Ascending aorta (tissue), 2 donors: ENCODE measurements at regions of chr15 and their contacts with region 1.

Region 1: DNA sequence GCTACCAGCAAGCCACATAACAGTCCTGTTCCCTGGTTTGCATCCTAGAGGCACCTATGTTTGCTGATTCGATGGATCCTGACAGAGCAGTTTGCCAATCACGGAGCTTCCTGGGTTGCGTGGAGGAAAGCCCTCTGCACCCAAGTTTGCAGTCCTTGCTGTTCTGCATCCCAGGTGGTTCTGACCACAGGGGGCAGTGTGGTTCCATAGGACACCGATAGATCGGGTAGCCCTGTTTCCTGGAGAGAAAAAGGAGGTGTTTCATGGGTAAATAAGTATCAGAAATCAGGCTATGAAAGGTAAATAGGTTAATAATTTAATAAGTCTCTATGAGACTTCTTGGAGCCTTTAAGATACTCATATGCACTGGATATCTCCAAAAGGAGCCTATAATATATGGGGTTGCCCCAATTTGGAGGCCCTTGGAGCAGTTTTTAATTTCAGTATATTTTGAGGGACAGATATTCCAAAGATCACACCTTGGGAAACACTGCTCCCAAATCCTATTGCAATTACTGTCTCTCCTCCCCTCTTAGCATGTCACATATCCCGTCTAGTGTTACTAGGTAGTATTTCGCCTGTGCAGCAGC is 194.6 kb upstream of the TPM1 start:
- DNase-seq: peak in 1 of 2 donors; percentile 85
- H3K4me3 ChIP-seq: no peak overlapping the region
- H3K27ac ChIP-seq: no peak overlapping the region
- H3K4me1 ChIP-seq: peaks cover 0 to 13% of the 10 kb centered on the region in 2 donors
- H3K27me3 ChIP-seq: no peaks in the 10 kb centered on the region
- CTCF ChIP-seq: peak; percentile 67 to 85 (median 78)

Region 2: GRCh38 chr15:62782039-62782791 is 65.8 kb before region 1 on chr15:
- intact Hi-C with region 1: loop called (anchors 5 kb)
- DNase-seq: peak; percentile 30 to 91
- H3K4me3 ChIP-seq: no peak overlapping the region
- H3K27ac ChIP-seq: peak overlapping the region; percentile 32 to 34
- H3K4me1 ChIP-seq: peaks cover 0 to 9% of the 10 kb centered on the region in 2 donors
- H3K27me3 ChIP-seq: no peaks in the 10 kb centered on the region
- CTCF ChIP-seq: peak; percentile 69 to 71 (median 69)

Region 3: DNA sequence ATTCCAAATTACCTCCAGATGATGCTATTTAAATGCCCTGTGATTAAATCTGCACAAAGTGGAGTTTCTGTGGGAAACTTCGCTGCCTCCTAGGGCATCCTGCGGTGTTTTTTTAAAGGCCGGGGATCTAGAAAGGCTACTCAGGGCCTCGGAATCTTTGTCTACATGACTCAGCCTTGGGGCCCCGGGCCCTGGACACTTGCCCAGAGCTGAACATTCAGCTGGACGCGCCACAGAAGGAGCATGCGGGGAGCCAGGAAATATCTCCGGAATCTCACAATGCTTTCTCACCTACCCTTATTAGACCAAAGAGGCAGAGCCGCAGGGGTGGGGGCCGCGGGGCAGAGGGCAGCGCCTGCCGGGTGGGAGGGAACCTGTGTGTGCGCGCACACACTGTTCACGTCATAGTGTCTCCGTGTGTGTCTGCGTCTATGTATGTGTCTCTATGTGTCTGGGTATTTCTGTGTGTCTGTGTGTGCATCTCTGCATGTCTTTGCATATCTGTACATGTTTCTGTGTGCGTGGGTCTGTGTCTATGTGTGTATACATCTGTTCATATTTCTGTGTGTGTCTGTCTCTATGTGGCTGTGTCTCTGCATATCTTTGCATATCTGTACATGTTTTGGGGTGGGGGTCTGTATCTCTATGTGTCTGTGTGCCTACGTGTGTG is 49.1 kb after region 1 on chr15:
- intact Hi-C with region 1: loop called (anchors 5 kb)
- DNase-seq: peak; percentile 75 to 97
- H3K4me3 ChIP-seq: peak overlapping the region in 1 of 2 donors; percentile 19
- H3K27ac ChIP-seq: peak overlapping the region; percentile 72 to 81
- H3K4me1 ChIP-seq: peaks cover 8 to 36% of the 10 kb centered on the region in 2 donors
- H3K27me3 ChIP-seq: no peaks in the 10 kb centered on the region
- CTCF ChIP-seq: no peak

Region 4: DNA sequence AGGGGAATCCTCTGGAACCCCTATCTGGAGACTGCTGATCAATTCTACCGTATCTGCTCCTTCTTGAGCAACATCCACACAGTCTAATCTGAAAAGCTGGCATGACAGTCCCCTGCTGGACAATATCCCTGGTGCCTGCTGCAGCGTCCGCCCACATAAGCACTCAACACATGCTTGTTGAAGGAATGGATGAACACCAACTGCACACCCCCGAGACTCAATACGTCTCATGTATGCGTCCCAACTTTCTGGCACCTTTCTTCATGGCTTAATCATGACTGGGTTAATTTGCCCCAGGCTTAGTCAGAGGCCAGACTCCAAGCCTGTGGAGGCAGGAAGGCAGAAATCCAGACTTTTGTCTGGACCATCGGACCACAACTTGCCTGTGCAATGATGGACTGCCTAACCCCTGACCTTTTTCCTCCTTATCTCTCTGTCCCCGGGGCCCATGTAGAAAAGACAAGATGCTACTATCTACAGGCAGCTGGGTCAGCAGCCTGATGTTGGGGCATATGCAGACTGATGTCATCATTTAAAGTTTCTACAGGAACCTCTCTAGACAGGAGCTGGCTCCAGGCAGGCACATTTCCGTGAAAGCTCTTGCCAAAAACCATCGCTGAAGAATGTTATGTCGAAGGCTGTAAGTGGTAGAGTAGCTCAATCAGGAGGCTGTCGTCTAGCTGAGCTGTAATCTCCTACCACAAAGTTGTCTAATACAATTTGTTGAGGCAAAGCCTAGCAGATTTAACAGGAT is 80.4 kb after region 1 on chr15:
- intact Hi-C with region 1: loop called (anchors 2 kb)
- DNase-seq: peak in 1 of 2 donors; percentile 81
- H3K4me3 ChIP-seq: no peak overlapping the region
- H3K27ac ChIP-seq: peak overlapping the region; percentile 61 to 69
- H3K4me1 ChIP-seq: peaks cover 7 to 16% of the 10 kb centered on the region in 2 donors
- H3K27me3 ChIP-seq: no peaks in the 10 kb centered on the region
- CTCF ChIP-seq: peak; percentile 16 to 29 (median 24)

Region 5: GRCh38 chr15:63093486-63094205 is 245.7 kb after region 1 on chr15:
- intact Hi-C with region 1: loop called (anchors 1 kb)
- DNase-seq: peak; percentile 16 to 88
- H3K4me3 ChIP-seq: no peak overlapping the region
- H3K27ac ChIP-seq: no peak overlapping the region
- H3K4me1 ChIP-seq: peaks cover 0 to 5% of the 10 kb centered on the region in 2 donors
- H3K27me3 ChIP-seq: no peaks in the 10 kb centered on the region
- CTCF ChIP-seq: peak; percentile 83 to 89 (median 86)